CD8-positive, alpha-beta memory T cell (primary cell): ENCODE measurements at regions of chr5 and their contacts with region 1.

Region 1: GRCh38 chr5:43040287-43041098 is at the start of gene ANXA2R:
- DNase-seq: peak; percentile 87 to 98 (median 95)
- H3K4me3 ChIP-seq: peak within 1 kb of the TSS; percentile 98
- H3K4me3 Mint-ChIP-seq: peak within 1 kb of the TSS; percentile 91 to 100 (median 99)
- H3K27ac ChIP-seq: peak within 1 kb of the TSS; percentile 88
- H3K27ac Mint-ChIP-seq: peak within 1 kb of the TSS; percentile 97 to 100 (median 99)
- H3K4me1 ChIP-seq: peaks cover 36% of the 10 kb centered on the region
- H3K4me1 Mint-ChIP-seq: peaks cover 45 to 62% (median 51%) of the 10 kb centered on the region in 3 donors
- H3K27me3 ChIP-seq: no peaks in the 10 kb centered on the region
- H3K27me3 Mint-ChIP-seq: peaks cover 0 to 13% of the 10 kb centered on the region in 2 donors
- total RNA-seq, gene ANXA2R: 6.0 to 6.8 TPM

Region 2: DNA sequence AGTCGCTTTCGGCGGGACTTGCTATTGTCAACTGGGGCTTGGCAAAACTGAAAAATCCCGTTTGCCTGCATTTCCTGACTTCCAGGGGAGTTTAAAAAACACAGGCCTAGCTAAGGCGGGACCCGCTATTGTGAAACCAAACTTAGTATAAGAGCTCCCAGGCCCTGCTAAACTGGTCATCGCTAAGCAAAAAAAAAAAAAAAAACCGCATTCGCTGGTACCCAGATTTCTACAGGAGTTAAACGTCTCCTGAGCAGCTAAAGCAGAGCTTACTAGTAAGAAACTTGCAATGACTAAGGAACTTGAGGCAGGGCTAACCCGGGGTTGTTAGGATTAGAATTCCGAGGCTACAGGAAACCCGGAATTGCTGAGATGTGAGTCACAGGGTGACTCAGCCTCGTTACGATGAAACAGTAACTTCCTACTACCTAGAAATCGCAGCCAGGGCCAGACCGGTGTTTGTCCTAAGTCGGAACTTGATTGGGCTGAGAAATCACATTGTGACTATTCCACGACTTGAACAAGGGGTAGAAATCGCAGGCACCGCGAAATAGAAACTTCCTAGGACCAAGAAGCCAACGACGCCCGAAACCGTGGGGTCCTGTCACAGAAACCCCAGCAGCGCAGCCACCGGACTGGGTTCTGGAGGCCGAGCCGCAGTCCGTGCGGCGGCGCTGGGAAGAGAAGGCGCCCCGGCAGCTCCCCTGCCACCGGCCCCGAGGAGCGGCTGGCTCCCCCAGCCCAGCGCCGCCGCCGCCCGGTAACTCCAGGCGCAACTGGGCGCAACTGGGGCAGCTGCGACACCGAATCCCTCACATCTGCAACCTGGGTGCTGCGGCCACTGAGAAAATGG is 89.8 kb before region 1 on chr5:
- CTCF ChIA-PET with region 1: interaction called, 35 read pairs
- POLR2A ChIA-PET with region 1: interaction called, 126 read pairs
- DNase-seq: peak; percentile 43 to 81 (median 61)
- H3K4me3 ChIP-seq: peak overlapping the region; percentile 97
- H3K4me3 Mint-ChIP-seq: peak overlapping the region; percentile 91 to 98 (median 95)
- H3K27ac ChIP-seq: peak overlapping the region; percentile 98
- H3K27ac Mint-ChIP-seq: peak overlapping the region; percentile 99 to 100 (median 100)
- H3K4me1 ChIP-seq: peaks cover 27% of the 10 kb centered on the region
- H3K4me1 Mint-ChIP-seq: peaks cover 29 to 50% (median 39%) of the 10 kb centered on the region in 3 donors
- H3K27me3 ChIP-seq: no peaks in the 10 kb centered on the region
- H3K27me3 Mint-ChIP-seq: peaks cover 0 to 16% of the 10 kb centered on the region in 2 donors

Region 3: DNA sequence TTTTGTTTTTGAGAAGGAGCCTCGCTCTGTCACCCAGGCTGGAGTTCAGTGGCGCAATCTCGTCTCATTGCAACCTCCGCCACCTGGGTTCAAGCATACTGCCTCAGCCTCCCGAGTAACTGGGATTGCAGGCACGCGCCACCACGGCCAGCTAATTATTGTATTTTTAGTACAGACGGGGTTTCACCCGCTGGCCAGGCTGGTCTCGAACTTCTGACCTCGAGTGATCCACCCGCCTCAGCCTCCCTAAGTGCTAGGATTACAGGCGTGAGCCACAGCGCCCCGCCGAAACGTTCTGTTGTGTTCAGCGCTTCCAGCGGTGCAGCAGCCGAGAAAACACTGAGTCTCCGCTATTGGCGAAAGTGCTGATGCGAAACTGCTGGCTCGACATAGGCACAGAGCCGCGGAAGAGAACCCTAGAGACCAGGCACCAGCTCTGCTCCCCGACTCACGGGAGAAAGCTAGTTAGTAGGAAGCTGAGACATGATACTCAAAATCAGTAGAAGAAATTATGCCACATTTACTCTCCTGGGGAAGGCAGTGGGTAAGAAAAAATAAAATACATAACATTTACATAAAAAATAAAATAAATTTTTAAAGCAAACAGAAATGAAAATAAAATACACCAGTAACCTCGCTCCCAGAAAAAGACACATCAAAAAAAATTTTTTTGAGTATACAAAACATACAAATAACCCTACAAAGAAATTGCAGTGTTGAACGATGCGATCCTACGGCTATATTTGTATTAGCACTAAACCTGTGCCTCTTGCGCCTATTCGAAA is 31.9 kb before region 1 on chr5:
- CTCF ChIA-PET with region 1: interaction called, 106 read pairs
- POLR2A ChIA-PET with region 1: interaction called, 162 read pairs
- DNase-seq: peak; percentile 84 to 95 (median 89)
- H3K4me3 ChIP-seq: peak overlapping the region; percentile 79
- H3K4me3 Mint-ChIP-seq: peak overlapping the region; percentile 85 to 98 (median 93)
- H3K27ac ChIP-seq: peak overlapping the region; percentile 80
- H3K27ac Mint-ChIP-seq: peak overlapping the region; percentile 97 to 100 (median 99)
- H3K4me1 ChIP-seq: peaks cover 26% of the 10 kb centered on the region
- H3K4me1 Mint-ChIP-seq: peaks cover 36 to 40% (median 39%) of the 10 kb centered on the region in 3 donors
- H3K27me3 ChIP-seq: no peaks in the 10 kb centered on the region
- H3K27me3 Mint-ChIP-seq: peaks cover 0 to 6% of the 10 kb centered on the region in 2 donors

Region 4: GRCh38 chr5:43019614-43020293 is 20.7 kb before region 1 on chr5:
- CTCF ChIA-PET with region 1: interaction called, 265 read pairs
- POLR2A ChIA-PET with region 1: interaction called, 403 read pairs
- DNase-seq: peak; percentile 75 to 93 (median 87)
- H3K4me3 ChIP-seq: peak overlapping the region; percentile 87
- H3K4me3 Mint-ChIP-seq: peak overlapping the region; percentile 97 to 100 (median 99)
- H3K27ac ChIP-seq: peak overlapping the region; percentile 96
- H3K27ac Mint-ChIP-seq: peak overlapping the region; percentile 98 to 100 (median 100)
- H3K4me1 ChIP-seq: peaks cover 36% of the 10 kb centered on the region
- H3K4me1 Mint-ChIP-seq: peaks cover 40 to 56% (median 54%) of the 10 kb centered on the region in 3 donors
- H3K27me3 ChIP-seq: no peaks in the 10 kb centered on the region
- H3K27me3 Mint-ChIP-seq: peaks cover 0 to 8% of the 10 kb centered on the region in 2 donors

Region 5: DNA sequence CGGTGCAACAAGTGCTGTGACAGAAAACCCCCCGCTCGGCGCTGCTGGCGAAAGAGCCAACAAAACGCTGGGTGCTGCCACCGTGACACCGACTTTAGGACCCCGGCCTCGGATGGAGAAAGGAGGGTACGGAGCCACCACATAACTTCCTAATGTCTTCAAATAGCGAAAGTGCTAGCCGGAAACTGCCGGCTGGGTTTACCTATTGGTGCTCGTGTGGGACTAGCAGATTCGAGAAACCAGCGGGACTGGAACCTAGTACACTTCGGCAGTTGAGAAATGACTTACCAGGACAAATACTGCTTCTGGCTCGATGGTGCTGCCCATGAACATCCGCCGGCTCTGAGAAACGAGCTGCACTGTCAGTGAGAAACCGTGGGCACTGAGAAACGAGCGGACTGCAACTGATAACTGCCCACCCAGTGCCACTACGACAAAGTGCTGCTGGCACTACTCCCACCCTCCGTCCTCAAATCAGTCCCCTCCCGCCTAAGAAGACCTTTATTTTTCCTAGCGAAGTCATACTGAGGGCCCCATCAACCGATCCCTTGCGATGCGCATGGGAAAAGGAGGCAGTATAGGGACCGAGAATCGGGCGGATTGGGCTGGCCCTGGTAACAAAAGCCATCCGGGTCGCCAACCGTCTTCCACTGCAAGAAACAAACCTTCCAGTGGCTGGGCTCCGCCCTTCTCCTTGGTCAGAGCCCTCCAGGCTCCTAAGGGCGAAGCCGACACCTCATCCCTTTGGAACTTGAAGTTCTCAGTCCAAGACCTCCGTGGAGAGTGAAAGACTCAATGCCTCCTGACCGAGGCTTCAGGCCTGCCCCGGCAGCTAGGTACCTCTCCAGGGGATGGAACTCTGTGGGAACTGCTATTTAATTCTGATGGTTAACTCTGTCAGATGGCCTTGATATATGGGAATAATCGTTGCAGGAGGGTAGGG is 26.6 kb after region 1 on chr5:
- CTCF ChIA-PET with region 1: interaction called, 142 read pairs
- POLR2A ChIA-PET with region 1: interaction called, 222 read pairs
- DNase-seq: peak; percentile 75 to 92 (median 87)
- H3K4me3 ChIP-seq: peak overlapping the region; percentile 99
- H3K4me3 Mint-ChIP-seq: peak overlapping the region; percentile 91 to 99 (median 98)
- H3K27ac ChIP-seq: peak overlapping the region; percentile 99
- H3K27ac Mint-ChIP-seq: peak overlapping the region; percentile 96 to 100 (median 99)
- H3K4me1 ChIP-seq: peaks cover 31% of the 10 kb centered on the region
- H3K4me1 Mint-ChIP-seq: peaks cover 42 to 59% (median 52%) of the 10 kb centered on the region in 3 donors
- H3K27me3 ChIP-seq: no peaks in the 10 kb centered on the region
- H3K27me3 Mint-ChIP-seq: no peaks in the 10 kb centered on the region

Region 6: DNA sequence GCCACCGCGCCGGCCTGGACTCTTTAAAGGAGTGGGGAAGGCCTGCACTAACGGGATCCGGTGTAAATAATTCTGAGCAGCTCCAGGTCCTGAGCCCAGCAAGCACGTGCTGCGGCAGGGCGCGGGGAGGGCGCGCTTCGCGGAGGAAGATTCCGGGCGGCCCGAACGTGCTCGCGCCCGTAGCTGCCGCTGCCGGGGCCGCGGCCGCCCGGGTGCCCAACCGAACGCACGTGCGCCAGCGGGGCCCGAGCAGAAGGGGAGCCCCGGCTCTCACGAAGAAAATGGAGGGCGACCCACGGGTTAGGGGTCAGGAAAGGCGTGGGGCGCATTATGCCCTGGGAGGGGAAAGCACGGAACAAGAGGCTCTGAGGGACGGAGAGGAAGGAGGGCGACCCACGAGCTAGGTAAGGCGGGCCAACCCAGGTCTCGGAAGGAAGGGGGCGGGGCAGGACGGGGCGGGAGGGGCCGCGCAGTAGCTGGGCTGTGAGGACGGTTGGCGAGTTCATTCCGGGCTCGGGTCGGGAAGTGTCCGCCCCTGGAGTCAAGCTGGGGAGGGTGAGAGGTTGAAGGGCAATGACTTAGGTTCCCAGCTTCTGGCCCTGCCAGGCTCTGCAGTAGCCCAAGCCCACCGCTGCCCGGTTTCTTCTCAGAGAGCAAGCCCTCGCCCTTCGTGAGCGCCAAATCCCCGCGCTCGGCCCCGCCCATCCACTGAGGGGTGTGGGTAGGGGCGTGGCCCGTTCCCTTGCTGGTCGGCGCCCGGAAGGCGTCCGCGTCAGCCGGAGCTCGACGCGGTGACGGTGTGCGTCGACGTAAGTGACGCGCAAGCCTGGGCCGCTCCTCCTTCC is 80.4 kb after region 1 on chr5 and contains the start of gene ZNF131:
- CTCF ChIA-PET with region 1: interaction called, 25 read pairs
- POLR2A ChIA-PET with region 1: interaction called, 44 read pairs
- DNase-seq: peak; percentile 94 to 99 (median 96)
- H3K4me3 ChIP-seq: peak within 1 kb of the TSS; percentile 89
- H3K4me3 Mint-ChIP-seq: peak within 1 kb of the TSS; percentile 90 to 99 (median 93)
- H3K27ac ChIP-seq: peak within 1 kb of the TSS; percentile 97
- H3K27ac Mint-ChIP-seq: peak within 1 kb of the TSS; percentile 84 to 99 (median 96)
- H3K4me1 ChIP-seq: peaks cover 45% of the 10 kb centered on the region
- H3K4me1 Mint-ChIP-seq: peaks cover 33 to 43% (median 40%) of the 10 kb centered on the region in 3 donors
- H3K27me3 ChIP-seq: no peaks in the 10 kb centered on the region
- H3K27me3 Mint-ChIP-seq: no peaks in the 10 kb centered on the region
- total RNA-seq, gene ZNF131: 39.2 to 39.5 TPM